Thyroid gland (tissue), 4 donors: ENCODE measurements at regions of chr12 and their contacts with region 1.

Region 1: GRCh38 chr12:48977315-48978281 is 524 bp upstream of the WNT1 start:
- DNase-seq: peak; percentile 50 to 62
- H3K4me3 ChIP-seq: peak overlapping the region in 1 of 3 donors; percentile 17
- H3K27ac ChIP-seq: no peak overlapping the region
- H3K4me1 ChIP-seq: peaks cover 37 to 42% of the 10 kb centered on the region in 2 donors
- H3K27me3 ChIP-seq: peaks cover 39% of the 10 kb centered on the region
- CTCF ChIP-seq: peak; percentile 47 to 85 (median 70)
- POLR2A ChIP-seq: no peak

Region 2: DNA sequence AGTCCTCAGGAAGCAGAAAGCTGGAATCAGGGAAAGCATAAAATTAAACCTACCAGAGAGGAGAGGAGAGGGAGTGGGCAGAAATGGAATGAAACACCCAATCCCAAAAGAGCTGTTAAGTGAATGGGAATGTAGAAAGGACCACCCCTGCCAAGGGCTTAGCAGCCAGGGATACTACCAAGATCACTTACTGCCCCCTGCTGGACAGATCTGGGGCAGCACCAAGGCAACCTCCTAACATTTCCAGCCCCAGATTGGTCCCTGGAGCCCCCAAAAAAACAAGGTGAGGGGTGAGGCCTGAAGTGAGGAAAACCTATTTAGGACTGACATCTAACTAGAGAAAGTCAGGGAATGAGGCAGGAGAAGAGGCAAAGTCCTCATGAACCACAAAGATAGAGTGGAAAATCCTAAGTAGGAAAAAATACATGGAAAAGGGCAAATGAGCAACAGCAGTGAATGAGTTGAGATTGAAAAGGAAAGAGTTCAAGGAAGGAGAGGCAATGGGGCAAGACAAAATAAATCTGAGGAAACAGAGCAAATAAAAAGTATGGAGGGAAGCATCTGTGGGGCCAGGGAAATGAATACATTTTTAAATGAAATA is 41.1 kb before region 1 on chr12:
- intact Hi-C with region 1: loop called (anchors 5 kb)
- DNase-seq: peak; percentile 67 to 72
- H3K4me3 ChIP-seq: no peak overlapping the region
- H3K27ac ChIP-seq: no peak overlapping the region
- H3K4me1 ChIP-seq: no peaks in the 10 kb centered on the region
- H3K27me3 ChIP-seq: no peaks in the 10 kb centered on the region
- CTCF ChIP-seq: peak; percentile 52 to 91 (median 66)
- POLR2A ChIP-seq: no peak